Right ventricle myocardium inferior (tissue), 1 donor: ENCODE measurements at regions of chr6 and their contacts with region 1.

Region 1: GRCh38 chr6:119349323-119350042 is at the start of gene MAN1A1:
- DNase-seq: peak; percentile 96
- ATAC-seq: peak; percentile 98
- total RNA-seq, gene MAN1A1: 22.4 TPM

Region 2: DNA sequence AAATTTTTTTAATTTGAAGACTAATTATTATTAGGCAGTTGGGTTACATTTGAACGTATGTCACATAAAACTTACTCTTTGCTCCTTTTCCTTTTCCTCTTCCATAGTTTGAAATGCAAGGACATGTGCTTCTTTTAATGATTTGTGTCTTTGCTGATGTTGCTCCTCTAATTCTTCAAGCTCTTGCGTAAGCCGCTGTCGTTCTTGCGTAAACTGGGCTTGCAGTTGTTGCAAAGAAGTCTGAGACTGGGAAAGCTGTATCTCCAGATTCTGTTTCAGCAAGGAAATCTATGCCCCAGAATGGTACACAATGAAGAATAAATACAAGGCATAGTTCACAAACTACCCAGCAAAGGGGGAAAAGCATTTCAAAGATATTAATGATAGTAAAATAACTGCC is 369.4 kb before region 1 on chr6:
- intact Hi-C with region 1: no loop called
- DNase-seq: peak; percentile 70
- ATAC-seq: no peak

Region 3: DNA sequence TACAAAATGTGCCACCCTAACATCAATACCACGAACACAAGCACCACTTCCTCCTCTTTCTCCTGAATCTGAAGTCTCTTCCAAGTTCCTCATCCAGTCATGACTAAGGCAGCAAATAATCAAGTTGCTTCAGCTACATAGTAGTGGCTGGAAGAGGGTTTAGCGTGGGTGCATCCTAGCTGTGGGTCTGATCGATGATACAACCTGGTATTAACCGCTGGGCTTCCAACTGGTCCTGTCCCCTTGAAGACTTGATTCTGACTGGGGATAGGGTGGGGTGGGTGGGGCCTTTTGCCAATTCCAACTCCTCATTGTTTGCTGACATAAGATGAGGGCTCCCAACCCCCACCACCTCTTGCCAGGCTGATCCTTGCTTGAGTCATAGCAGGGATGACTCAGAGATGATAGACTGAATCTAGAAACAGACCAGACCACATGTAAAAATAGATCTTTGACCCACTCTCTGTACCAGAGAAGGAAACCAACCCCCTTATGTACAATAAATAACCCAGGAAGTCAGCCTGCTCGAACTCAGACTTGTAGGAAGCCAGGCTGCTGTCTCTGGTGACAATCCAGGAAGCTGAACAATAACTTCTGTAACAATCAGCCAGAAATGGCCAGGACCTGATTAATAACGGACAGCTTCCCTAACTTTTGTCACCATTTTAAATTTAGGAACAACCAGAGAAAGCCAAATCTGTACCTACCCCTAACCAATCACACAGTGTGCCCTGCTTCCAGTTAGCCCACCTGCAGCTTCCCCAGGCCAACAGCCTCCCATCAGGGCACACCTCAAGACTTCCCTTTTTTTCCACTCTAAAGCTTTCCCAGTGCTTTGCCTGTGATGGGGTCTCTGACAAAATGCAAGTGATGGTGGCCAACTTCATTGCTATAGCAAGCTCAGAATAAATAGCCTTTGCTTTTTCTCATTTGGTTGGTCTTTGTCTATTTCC is 202.1 kb before region 1 on chr6:
- intact Hi-C with region 1: loop called (anchors 10 kb)
- DNase-seq: no peak
- ATAC-seq: peak; percentile 61

Region 4: GRCh38 chr6:119308048-119308570 is 41.4 kb before region 1 on chr6:
- intact Hi-C with region 1: loop called (anchors 5 kb)
- DNase-seq: no peak
- ATAC-seq: peak; percentile 45

Region 5: GRCh38 chr6:119395192-119395591 is 45.7 kb after region 1 on chr6:
- intact Hi-C with region 1: no loop called
- DNase-seq: no peak
- ATAC-seq: no peak

Region 6: DNA sequence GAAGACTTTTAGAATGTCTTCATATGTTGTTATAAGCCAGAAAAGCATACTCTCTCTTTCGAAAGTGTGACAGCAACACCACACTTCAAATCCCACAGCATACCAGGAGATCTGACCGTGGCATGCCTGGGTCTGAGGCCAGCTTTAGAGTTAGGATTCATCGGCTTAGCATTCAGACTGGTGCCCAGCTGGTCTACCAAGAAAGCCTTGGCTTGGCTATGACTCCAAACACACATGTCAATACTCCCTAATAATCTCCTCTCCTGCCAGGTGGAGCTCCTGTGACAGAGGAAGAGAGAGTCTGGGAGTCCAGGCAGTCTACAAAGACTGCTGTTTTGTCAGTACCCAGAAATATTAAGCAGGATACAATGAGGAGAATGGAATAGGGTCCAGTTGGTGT is 77.1 kb after region 1 on chr6:
- intact Hi-C with region 1: no loop called
- DNase-seq: no peak
- ATAC-seq: no peak